ENCODE measurements at regions of chr20 and their contacts with region 1.

Region 1: DNA sequence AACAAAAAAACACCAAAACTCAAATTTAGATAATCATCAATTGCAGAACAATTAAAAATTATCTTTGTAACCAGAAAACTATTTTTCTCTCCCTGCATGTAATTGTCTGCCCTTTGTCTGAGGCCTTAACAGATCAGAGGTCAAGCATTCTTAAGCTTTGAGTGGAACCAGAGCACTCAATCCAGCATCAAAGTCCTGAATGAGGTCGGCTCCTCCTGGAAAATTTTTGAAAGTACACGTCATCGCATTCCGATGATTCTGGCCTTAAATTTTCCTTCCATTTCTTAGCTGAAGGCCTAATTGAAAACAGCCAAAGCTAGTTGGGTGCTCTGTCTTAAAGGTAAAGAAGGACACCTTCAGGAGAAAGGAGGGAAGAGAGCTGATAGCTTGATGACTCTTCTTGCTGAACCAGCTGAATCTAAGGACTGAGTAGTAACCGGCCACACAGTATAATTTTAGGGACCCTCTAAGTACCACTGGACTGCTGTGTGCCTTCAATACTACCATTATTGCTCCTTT is 510.2 kb upstream of the SULF2 start:
- DNase-seq: peak; percentile 98
- ATAC-seq: peak; percentile 85
- H3K4me3 ChIP-seq: no peak overlapping the region
- H3K27ac ChIP-seq: peak overlapping the region; percentile 36
- H3K4me1 ChIP-seq: peaks cover 50% of the 10 kb centered on the region
- H3K27me3 ChIP-seq: no peaks in the 10 kb centered on the region
- CTCF ChIP-seq: peak; percentile 83

Region 2: GRCh38 chr20:47663333-47664067 is 632.0 kb before region 1 on chr20:
- CTCF ChIA-PET with region 1: no interaction called
- POLR2A ChIA-PET with region 1: no interaction called
- intact Hi-C with region 1: loop called (anchors 5 kb)
- DNase-seq: peak; percentile 86
- ATAC-seq: peak; percentile 90
- H3K4me3 ChIP-seq: no peak overlapping the region
- H3K27ac ChIP-seq: no peak overlapping the region
- H3K4me1 ChIP-seq: no peaks in the 10 kb centered on the region
- H3K27me3 ChIP-seq: no peaks in the 10 kb centered on the region
- CTCF ChIP-seq: peak; percentile 98

Region 3: DNA sequence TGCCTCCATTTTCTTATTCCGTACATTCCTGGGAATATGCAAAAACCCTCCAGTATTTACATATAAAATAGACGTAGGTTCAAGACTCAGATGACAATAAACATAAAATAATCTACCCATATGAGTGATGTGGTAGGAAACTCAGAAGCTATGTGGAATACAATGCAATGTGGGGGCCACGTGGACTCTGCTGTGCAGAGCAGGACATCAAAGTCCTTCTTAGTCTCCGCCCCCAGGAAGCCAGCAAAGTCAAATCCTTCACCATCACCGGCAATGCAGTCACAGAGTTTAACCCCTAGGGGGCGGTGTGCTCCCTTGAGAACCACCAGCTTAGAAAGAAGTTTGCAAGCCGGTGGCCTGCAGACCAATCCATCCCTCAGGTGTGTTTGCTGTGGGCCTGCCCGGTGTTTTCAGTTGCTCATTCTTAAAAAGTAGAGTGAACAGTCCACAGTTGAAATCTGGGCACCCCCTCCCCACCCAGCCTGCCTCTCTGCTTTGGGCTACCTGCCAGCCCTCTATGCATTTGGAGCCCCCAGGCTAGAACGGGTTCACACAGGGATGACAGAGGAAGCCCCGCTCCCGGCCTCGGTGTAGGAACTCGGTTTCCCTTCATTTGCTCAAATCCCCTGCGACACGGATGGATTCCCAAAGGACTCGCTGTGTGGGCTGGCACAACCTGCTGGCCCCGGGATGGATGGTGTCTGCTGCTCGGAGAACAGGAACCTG is 570.1 kb before region 1 on chr20:
- CTCF ChIA-PET with region 1: interaction called, 6 read pairs
- POLR2A ChIA-PET with region 1: no interaction called
- intact Hi-C with region 1: loop called (anchors 5 kb)
- DNase-seq: peak; percentile 93
- ATAC-seq: peak; percentile 85
- H3K4me3 ChIP-seq: no peak overlapping the region
- H3K27ac ChIP-seq: no peak overlapping the region
- H3K4me1 ChIP-seq: peaks cover 12% of the 10 kb centered on the region
- H3K27me3 ChIP-seq: no peaks in the 10 kb centered on the region
- CTCF ChIP-seq: peak; percentile 98

Region 4: DNA sequence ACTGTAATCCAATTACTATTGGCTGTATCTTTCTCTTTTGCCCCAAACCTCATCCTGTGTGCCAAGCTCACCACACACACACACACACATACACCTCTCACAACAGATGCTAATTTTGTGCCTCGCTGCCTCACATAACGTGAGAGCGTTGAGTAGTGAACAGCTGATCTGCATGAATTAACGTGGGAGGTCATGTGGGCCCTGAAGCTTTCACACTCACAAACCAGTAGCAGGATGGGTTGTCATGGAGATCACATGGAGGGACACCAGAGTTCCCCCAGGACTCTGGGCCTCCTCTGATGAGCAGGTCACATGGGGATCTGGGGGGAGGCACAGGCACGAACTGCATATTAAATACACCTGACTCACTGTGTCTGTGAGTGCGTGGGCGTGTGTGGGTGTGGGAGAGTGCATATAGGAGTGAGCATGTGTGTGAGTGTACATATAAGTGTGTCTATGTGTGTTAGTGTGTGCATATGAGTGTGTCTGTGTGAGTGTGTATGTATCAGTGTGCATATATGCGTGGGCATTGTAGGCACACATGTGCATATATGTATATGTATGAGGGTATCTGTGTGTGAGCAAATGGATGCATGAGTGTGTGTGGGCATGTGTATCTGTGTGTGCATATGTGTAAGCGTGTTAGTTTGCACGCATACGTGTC is 447.5 kb before region 1 on chr20:
- CTCF ChIA-PET with region 1: no interaction called
- POLR2A ChIA-PET with region 1: interaction called, 4 read pairs
- intact Hi-C with region 1: loop called (anchors 10 kb)
- DNase-seq: peak; percentile 38
- ATAC-seq: peak; percentile 10
- H3K4me3 ChIP-seq: no peak overlapping the region
- H3K27ac ChIP-seq: peak overlapping the region; percentile 83
- H3K4me1 ChIP-seq: peaks cover 50% of the 10 kb centered on the region
- H3K27me3 ChIP-seq: no peaks in the 10 kb centered on the region
- CTCF ChIP-seq: no peak

Region 5: DNA sequence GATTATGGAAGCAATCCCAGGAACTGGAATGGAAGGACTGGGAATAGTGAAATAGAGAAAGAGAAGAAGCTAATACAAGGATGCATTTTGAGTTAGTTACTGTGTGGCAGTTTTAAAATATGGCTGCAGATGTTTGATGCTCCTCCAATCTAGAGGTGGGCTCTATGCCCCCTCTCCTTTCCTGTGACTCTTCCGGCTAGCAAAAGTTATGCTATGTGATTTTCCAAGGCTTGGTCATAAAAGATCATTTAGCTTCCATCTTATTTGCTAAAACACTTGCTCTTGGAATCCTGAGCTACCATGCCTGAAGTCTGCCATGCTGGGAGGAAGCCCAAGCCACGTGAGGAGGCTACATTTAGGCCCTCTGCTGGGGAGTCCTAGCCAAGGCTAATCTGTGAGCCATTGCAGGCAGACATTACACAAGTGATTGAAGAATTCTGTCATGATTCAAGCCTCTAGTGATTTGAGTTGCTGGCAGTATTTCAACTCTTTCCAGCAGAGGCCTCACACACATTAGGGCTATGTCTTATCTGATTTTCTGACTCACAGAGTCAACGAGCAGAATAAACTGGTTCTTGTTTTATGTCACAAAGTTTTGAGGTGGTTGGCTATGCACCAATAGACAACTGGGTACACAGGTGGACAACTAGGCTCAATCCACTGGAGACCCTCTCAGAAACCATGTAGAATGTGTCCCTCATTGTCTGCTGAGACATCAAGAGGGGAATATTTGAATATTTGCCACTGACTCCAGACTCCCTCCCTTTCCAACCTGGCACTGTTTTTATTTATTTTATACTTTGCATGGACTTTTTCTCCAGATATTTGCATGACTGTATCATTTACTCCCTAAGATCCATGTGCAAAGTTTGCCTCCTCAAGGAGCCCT is 283.1 kb before region 1 on chr20:
- CTCF ChIA-PET with region 1: no interaction called
- POLR2A ChIA-PET with region 1: no interaction called
- intact Hi-C with region 1: loop called (anchors 10 kb)
- DNase-seq: peak; percentile 98
- ATAC-seq: peak; percentile 88
- H3K4me3 ChIP-seq: no peak overlapping the region
- H3K27ac ChIP-seq: peak overlapping the region; percentile 84
- H3K4me1 ChIP-seq: peaks cover 34% of the 10 kb centered on the region
- H3K27me3 ChIP-seq: no peaks in the 10 kb centered on the region
- CTCF ChIP-seq: peak; percentile 84